ENCODE measurements at regions of chr7 and their contacts with region 1.

Region 1: GRCh38 chr7:99616359-99617191 is at the start of gene ZSCAN25:
- DNase-seq: peak; percentile 96 to 98 (median 96)
- ATAC-seq: peak; percentile 97
- H3K4me3 ChIP-seq: peak within 1 kb of the TSS; percentile 84
- H3K27ac ChIP-seq: peak within 1 kb of the TSS; percentile 85
- H3K4me1 ChIP-seq: peaks cover 9 to 20% of the 10 kb centered on the region in 2 experiments; a peak in 4 of 5 replicates
- H3K27me3 ChIP-seq: peaks cover 0 to 2% of the 10 kb centered on the region in 2 experiments; a peak in 1 of 5 replicates
- CTCF ChIP-seq: peak; percentile 75 to 90 (median 77)
- EP300 ChIP-seq: peak; percentile 32; the same call in 1 of the 2 replicates
- POLR2A ChIP-seq: peak; percentile 96
- RAD21 ChIP-seq: peak; percentile 48 to 70
- polyA plus RNA-seq, gene ZSCAN25: 0.94 to 1.1 TPM

Region 2: DNA sequence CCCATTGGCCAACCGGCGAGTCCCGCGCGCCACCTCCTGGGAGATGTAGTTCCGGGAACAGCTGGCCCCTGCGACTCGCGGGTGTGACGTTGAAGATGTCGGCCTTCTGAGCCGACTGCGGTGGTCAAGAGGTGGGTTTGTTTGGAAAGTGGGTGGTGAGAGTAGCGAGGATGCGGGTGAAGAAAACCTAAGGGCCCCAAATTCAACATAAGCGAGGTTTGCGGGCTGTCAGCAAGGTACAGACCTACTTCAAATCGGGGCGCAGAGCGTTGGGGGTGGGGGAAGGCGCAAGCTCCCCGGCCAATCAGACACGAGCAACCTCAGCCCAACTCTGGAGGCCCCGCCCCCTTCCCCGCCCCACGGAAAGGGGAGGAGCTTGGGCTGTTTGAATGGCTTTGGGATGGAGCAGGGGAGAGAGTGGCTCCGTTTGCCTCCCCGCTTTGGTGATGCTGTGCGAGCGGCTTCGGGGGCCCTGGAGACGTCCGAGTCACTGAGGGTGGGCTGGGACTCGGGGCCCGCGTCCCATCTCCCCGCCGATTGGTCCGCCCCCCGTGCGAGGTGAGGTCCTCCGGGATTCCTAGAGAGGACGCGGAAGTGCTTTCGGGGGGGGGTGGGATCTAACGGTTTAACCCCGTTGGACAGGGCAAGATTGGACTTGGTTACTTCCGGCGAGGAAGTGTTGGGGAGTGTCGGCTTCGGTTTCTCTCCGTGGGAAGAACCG is 111.8 kb before region 1 on chr7 and contains the start of gene ZKSCAN5:
- CTCF ChIA-PET with region 1: no interaction called
- POLR2A ChIA-PET with region 1: interaction called, 6 read pairs
- in situ Hi-C with region 1: no loop called
- intact Hi-C with region 1: loop called (anchors 2 kb)
- DNase-seq: peak; percentile 98 to 99 (median 98)
- ATAC-seq: peak; percentile 88
- H3K4me3 ChIP-seq: peak within 1 kb of the TSS; percentile 84
- H3K27ac ChIP-seq: peak within 1 kb of the TSS; percentile 77
- H3K4me1 ChIP-seq: peaks cover 4 to 27% of the 10 kb centered on the region in 2 experiments; a peak in 3 of 5 replicates
- H3K27me3 ChIP-seq: no peaks in the 10 kb centered on the region
- CTCF ChIP-seq: 0 out of 6 replicates have a peak, but pooled peaks of 1 of the 3 experiments have one; percentile 8
- EP300 ChIP-seq: peak; percentile 68
- POLR2A ChIP-seq: peak; percentile 93
- RAD21 ChIP-seq: no peak; a peak in 1 of 4 replicates
- polyA plus RNA-seq, gene ZKSCAN5: 4.2 to 8.8 TPM

Region 3: DNA sequence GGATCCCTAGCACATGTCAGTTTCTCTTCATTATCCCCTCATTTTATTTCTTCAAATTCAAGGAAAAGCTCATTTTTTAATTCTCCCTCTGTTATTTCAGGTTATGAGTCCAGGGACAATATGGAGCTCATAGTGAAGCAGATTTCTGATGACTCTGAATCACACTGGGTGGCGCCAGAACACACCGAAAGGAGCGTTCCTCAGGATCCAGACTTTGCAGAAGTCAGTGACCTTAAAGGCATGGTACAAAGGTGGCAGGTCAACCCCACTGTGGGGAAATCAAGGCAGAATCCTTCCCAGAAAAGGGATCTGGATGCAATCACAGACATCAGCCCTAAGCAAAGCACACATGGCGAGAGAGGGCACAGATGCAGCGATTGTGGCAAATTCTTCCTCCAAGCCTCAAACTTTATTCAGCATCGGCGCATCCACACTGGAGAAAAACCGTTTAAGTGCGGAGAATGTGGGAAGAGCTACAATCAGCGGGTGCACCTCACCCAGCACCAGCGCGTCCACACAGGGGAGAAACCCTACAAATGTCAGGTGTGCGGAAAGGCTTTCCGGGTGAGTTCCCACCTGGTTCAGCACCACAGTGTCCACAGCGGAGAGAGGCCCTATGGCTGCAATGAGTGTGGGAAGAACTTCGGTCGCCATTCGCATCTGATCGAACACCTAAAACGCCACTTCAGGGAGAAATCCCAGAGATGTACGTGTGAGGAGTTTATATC is 90.7 kb before region 1 on chr7:
- CTCF ChIA-PET with region 1: no interaction called
- POLR2A ChIA-PET with region 1: interaction called, 3 read pairs
- in situ Hi-C with region 1: no loop called
- intact Hi-C with region 1: loop called (anchors 1 kb)
- DNase-seq: peak in 1 of 4 experiments; percentile 45
- ATAC-seq: peak; percentile 90
- H3K4me3 ChIP-seq: no peak overlapping the region
- H3K27ac ChIP-seq: no peak overlapping the region
- H3K4me1 ChIP-seq: no peaks in the 10 kb centered on the region
- H3K27me3 ChIP-seq: no peaks in the 10 kb centered on the region; a peak in 1 of 5 replicates
- CTCF ChIP-seq: peak; percentile 48 to 64 (median 53)
- EP300 ChIP-seq: no peak
- POLR2A ChIP-seq: no peak
- RAD21 ChIP-seq: peak in 1 of 2 experiments; percentile 50; a peak in 2 of 4 replicates

Region 4: DNA sequence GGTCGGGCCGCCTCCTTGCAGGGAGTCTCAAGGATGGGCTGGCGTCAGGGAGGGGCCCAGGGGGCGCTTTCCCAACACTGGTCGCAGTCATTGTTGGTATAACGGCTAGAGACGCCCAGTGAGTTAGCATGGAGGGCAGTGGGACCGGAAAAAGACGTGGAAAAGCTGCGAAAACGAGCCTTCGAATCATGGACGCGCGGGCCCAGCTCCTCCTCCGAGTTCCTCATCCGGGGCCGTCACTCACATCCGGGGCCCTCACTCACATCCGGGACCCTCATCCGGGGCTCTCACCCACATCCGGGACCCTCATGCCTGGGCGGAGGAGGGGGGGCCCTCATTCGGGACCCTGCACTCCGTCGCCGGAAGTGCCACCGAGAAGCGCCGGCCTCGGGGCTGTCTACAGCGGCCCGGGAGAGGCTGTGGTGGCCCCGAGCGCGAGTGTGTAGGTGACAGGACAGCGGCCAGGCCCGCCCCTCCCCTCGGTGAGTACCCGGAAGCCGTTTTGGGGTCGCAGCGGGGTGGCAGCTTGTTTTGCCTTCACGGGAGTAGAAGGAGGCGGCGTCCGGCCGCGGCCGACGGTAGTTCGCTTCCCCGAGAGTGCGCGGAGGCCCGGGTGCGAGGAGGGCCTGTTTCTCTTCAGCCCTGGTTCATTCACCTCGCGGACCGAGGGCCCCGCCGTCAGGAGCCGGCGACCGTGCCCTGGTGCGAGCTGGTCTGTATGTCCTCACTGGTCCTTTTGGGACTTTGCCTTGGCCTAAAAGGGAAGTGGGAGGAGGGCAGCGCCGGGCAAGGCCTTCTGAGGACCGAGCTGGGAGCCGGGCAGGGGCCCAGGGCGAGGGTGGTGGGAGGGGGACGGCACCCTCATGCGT is 58.0 kb before region 1 on chr7 and contains the start of gene ZNF655:
- CTCF ChIA-PET with region 1: no interaction called
- POLR2A ChIA-PET with region 1: interaction called, 4 read pairs
- in situ Hi-C with region 1: no loop called
- intact Hi-C with region 1: loop called (anchors 2 kb)
- DNase-seq: peak; percentile 97 to 99 (median 98)
- ATAC-seq: peak; percentile 92
- H3K4me3 ChIP-seq: peak within 1 kb of the TSS; percentile 88
- H3K27ac ChIP-seq: peak within 1 kb of the TSS; percentile 95
- H3K4me1 ChIP-seq: peaks cover 16 to 23% of the 10 kb centered on the region in 2 experiments
- H3K27me3 ChIP-seq: no peaks in the 10 kb centered on the region
- CTCF ChIP-seq: 0 out of 6 replicates have a peak, but pooled peaks of 1 of the 3 experiments have one; percentile 20
- EP300 ChIP-seq: peak; percentile 25; the same call in 1 of the 2 replicates
- POLR2A ChIP-seq: peak; percentile 97
- RAD21 ChIP-seq: no peak; a peak in 1 of 4 replicates
- polyA plus RNA-seq, gene ZNF655: 25.7 to 34.1 TPM

Region 5: GRCh38 chr7:99631295-99632109 is 14.9 kb after region 1 on chr7:
- CTCF ChIA-PET with region 1: no interaction called
- POLR2A ChIA-PET with region 1: interaction called, 29 read pairs
- in situ Hi-C with region 1: no loop called
- intact Hi-C with region 1: no loop called
- DNase-seq: peak; percentile 39 to 76 (median 58)
- ATAC-seq: peak; percentile 94
- H3K4me3 ChIP-seq: no peak overlapping the region
- H3K27ac ChIP-seq: no peak overlapping the region; the same call in 2 of the 3 replicates
- H3K4me1 ChIP-seq: peaks cover 0 to 4% of the 10 kb centered on the region in 2 experiments; a peak in 4 of 5 replicates
- H3K27me3 ChIP-seq: no peaks in the 10 kb centered on the region
- CTCF ChIP-seq: peak; percentile 70 to 90 (median 80)
- EP300 ChIP-seq: no peak
- POLR2A ChIP-seq: no peak
- RAD21 ChIP-seq: peak; percentile 84 to 88

Region 6: GRCh38 chr7:99685129-99685876 is 68.7 kb after region 1 on chr7:
- CTCF ChIA-PET with region 1: no interaction called
- POLR2A ChIA-PET with region 1: no interaction called
- in situ Hi-C with region 1: no loop called
- intact Hi-C with region 1: no loop called
- DNase-seq: no peak
- ATAC-seq: peak; percentile 65
- H3K4me3 ChIP-seq: no peak overlapping the region
- H3K27ac ChIP-seq: 0 out of 3 replicates have a peak overlapping the region, but pooled peaks have one; percentile 3
- H3K4me1 ChIP-seq: peaks cover 9% of the 10 kb centered on the region in 2 experiments; a peak in 4 of 5 replicates
- H3K27me3 ChIP-seq: no peaks in the 10 kb centered on the region
- CTCF ChIP-seq: no peak
- EP300 ChIP-seq: no peak
- POLR2A ChIP-seq: no peak
- RAD21 ChIP-seq: no peak

Measured in K562 (cell line).